ENCODE measurements at regions of chr11 and their contacts with region 1.

Region 1: DNA sequence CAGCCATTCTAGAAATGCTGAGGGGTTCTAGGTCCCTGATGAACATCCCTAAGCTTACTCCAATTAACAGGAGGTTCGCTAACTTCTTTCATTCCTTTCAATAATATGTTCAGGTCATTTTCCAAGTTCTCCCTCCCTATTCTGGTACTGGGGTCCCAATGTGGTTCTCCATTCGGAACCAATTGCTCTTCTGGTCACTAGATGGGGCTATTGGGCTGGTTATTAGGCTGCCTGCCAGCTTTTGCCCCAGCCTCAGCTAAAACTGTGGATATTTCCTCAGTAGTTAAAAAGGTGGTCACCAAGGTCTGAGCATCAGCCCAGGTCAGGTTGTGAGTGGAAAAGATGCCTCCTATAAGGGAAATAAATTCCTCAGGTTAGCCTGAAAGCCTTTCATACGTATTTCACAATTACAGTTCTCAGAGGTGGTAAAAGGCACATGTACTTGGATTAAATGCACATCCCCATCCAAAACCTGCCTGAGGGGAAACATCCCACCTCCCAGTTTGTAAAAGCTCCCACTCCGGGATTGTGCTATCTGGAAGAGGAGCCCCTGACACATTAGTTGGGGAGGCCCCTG is 161.1 kb upstream of the CCDC179 start:
- DNase-seq: peak; percentile 56
- ATAC-seq: peak; percentile 39; the same call in 1 of the 2 replicates
- H3K4me3 ChIP-seq: no peak overlapping the region
- H3K27ac ChIP-seq: no peak overlapping the region
- H3K4me1 ChIP-seq: peaks cover 7% of the 10 kb centered on the region; the same call in 1 of the 2 replicates
- H3K27me3 ChIP-seq: no peaks in the 10 kb centered on the region
- CTCF ChIP-seq: peak; percentile 86

Region 2: GRCh38 chr11:22851477-22851876 is 169.9 kb before region 1 on chr11:
- CTCF ChIA-PET with region 1: no interaction called
- POLR2A ChIA-PET with region 1: no interaction called
- intact Hi-C with region 1: no loop called
- DNase-seq: no peak
- ATAC-seq: no peak
- H3K4me3 ChIP-seq: no peak overlapping the region
- H3K27ac ChIP-seq: no peak overlapping the region
- H3K4me1 ChIP-seq: no peaks in the 10 kb centered on the region
- H3K27me3 ChIP-seq: no peaks in the 10 kb centered on the region
- CTCF ChIP-seq: no peak

Region 3: GRCh38 chr11:22957786-22958185 is 63.6 kb before region 1 on chr11:
- CTCF ChIA-PET with region 1: no interaction called
- POLR2A ChIA-PET with region 1: no interaction called
- intact Hi-C with region 1: no loop called
- DNase-seq: peak; percentile 4
- ATAC-seq: peak; percentile 81
- H3K4me3 ChIP-seq: no peak overlapping the region
- H3K27ac ChIP-seq: no peak overlapping the region
- H3K4me1 ChIP-seq: no peaks in the 10 kb centered on the region
- H3K27me3 ChIP-seq: no peaks in the 10 kb centered on the region
- CTCF ChIP-seq: no peak

Region 4: DNA sequence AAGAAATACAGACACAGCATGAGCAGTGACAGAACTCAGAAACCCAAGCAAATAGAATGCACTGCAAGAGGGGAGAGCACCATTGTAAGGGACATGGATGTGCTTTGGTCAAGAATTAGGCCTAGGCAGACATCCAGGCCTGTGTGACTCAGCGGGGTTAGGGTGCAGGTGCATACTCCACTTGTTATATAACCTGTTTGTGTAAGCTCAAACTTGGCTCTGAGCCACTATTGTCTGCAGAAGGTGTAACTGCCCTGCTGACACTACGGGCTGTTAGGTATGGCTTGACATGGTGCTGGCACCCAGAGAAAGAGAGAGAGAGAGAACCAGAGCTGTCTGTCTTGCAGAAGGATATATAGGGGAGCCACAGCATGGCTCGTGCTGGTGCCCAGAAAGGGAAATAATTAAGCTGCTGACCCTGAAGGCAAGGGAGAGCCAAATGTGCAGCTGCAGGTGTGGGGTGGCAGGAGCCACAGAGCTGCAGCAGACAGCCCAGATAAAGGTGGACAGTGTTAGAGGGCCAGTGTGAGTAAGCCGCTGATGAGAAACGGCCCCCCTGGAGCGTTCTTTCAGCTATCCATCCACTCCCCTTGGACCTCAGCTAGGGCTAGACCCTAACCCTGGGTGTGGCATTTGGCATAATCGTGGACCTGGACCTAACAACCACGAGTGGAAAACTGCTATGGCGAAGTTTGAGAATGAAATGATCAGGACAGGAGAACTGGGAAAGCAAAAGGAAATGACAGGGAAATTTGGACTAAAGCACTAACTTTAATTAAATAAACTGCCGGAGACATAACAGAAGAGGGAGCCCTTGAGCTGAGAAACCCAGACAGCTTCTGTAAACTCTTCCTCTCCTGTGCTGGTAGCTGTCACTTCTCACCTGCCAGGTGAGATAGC is 91.9 kb after region 1 on chr11:
- CTCF ChIA-PET with region 1: interaction called, 6 read pairs
- POLR2A ChIA-PET with region 1: no interaction called
- intact Hi-C with region 1: loop called (anchors 2 kb)
- DNase-seq: peak; percentile 85
- ATAC-seq: peak; percentile 89
- H3K4me3 ChIP-seq: peak overlapping the region; percentile 51; the same call in 1 of the 2 replicates
- H3K27ac ChIP-seq: peak overlapping the region; percentile 34
- H3K4me1 ChIP-seq: peaks cover 13% of the 10 kb centered on the region; the same call in 1 of the 2 replicates
- H3K27me3 ChIP-seq: no peaks in the 10 kb centered on the region
- CTCF ChIP-seq: peak; percentile 77

Region 5: GRCh38 chr11:23653071-23653675 is 631.8 kb after region 1 on chr11:
- CTCF ChIA-PET with region 1: no interaction called
- POLR2A ChIA-PET with region 1: no interaction called
- intact Hi-C with region 1: loop called (anchors 10 kb)
- DNase-seq: no peak
- ATAC-seq: no peak
- H3K4me3 ChIP-seq: no peak overlapping the region
- H3K27ac ChIP-seq: no peak overlapping the region
- H3K4me1 ChIP-seq: no peaks in the 10 kb centered on the region
- H3K27me3 ChIP-seq: no peaks in the 10 kb centered on the region
- CTCF ChIP-seq: no peak

Region 6: DNA sequence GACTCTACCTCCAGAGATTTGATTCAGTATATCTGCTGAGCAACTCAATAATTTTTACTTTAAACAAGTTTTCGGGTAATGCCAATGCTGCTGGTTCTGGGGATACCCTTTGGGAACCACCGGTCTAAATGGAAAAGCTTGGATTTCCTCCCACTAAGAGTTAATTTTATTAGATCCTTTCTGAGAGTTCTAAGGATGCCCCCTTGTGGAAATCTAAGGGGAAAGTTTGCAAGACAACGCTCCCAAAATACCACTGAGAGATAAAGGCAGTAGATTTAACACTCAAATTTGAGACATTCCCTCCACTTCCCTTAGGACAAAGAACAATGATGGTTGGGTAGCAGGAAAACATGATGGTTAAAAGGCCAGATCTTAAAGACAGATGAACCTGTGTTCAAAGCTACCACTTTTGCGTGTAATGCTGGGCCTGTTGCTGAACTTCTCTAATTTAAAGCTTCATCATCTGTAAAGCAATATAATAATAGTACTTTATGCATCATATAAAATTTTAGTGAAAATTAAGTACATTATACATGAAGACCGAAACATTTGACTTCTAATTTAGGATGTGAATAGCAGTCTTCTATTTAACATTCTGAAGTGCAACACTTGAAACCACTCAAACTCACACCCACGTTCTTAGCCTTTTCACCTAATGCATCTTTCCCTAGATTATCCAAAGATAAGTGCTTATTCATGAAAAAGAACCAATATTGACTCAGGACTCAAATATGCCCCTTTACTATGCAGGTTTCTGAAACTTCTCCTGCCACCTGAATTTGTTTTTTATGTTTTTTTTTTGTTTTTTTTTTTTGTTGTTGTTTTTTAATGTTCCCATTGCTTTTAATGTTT is 1365.4 kb after region 1 on chr11:
- CTCF ChIA-PET with region 1: no interaction called
- POLR2A ChIA-PET with region 1: no interaction called
- intact Hi-C with region 1: loop called (anchors 2 kb)
- DNase-seq: peak; percentile 60
- ATAC-seq: peak; percentile 49
- H3K4me3 ChIP-seq: no peak overlapping the region
- H3K27ac ChIP-seq: no peak overlapping the region
- H3K4me1 ChIP-seq: peaks cover 11% of the 10 kb centered on the region
- H3K27me3 ChIP-seq: no peaks in the 10 kb centered on the region
- CTCF ChIP-seq: peak; percentile 71

Measured in PC-3 (cell line).